K562 (cell line): ENCODE measurements at regions of chr1 and their contacts with region 1.

Region 1: DNA sequence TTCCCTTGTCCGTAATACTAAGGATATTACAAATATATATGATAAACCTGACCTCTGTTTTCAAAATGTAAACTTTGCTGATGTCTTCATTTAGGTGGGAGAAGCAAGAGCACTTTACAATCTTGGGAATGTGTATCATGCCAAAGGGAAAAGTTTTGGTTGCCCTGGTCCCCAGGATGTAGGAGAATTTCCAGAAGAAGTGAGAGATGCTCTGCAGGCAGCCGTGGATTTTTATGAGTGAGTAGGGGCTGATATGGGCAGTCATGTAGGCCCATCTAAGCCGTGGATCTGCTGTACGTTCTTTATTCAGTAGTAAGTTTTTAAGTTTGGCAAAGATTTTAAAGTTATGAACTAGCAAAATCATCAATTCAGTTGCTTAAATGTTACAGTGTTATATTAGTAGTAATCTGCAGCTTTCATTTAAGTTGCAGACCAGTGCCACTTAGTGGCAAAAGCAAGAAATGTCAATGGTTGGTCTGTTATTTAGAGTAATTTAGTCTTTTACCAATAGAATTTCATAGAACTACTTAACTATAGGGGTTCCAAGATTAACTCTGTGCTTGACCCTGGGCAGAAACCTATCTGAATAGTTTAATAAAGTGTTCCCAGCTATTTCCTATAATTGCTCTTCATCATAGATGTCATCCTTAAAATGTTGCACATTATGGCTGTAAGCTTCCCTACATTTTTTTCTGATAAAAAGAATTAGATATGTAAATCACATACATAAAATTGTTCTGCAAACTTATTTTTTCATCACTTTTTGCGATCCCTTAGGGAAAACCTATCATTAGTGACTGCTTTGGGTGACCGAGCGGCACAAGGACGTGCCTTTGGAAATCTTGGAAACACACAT is 21.3 kb downstream of the GPSM2 start:
- DNase-seq: peak in 2 of 4 experiments; percentile 56 to 72
- ATAC-seq: peak; percentile 91
- H3K4me3 ChIP-seq: no peak overlapping the region
- H3K27ac ChIP-seq: no peak overlapping the region
- H3K4me1 ChIP-seq: no peaks in the 10 kb centered on the region
- H3K27me3 ChIP-seq: no peaks in the 10 kb centered on the region
- CTCF ChIP-seq: peak; percentile 61 to 94 (median 67); a peak in 5 of 6 replicates
- EP300 ChIP-seq: no peak
- POLR2A ChIP-seq: no peak
- RAD21 ChIP-seq: peak; percentile 89 to 96

Region 2: DNA sequence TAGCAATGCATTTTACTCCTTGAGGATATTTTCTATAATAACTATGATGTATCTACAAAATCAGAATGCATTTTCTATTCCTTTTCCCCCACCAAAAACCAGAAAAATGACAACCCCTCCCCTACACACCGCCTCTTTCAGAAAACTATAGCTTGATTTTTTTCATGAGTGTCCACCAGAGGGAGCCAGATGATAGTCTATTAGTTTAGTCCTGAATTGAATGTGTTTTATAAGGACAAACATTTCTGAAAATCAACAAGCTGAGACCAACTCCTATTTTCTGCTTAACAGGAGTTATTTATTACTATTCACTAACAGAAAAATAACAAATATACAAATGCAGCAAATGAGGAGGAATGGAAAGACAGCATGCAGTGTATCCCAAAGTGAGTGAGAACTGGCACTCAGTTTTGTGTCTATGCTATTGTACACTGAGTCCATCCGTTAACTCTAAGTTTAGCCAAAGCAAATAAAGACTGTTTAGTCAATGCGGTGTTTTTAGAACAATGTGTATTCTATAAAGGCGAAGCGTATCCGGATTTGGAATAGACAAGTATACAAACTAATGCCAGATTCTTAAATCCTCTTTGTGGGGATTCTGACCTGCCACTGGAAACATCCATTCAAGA is 1115.8 kb before region 1 on chr1:
- CTCF ChIA-PET with region 1: no interaction called
- POLR2A ChIA-PET with region 1: no interaction called
- in situ Hi-C with region 1: no loop called
- intact Hi-C with region 1: loop called (anchors 5 kb)
- DNase-seq: peak; percentile 35 to 75 (median 57)
- ATAC-seq: peak; percentile 89
- H3K4me3 ChIP-seq: no peak overlapping the region
- H3K27ac ChIP-seq: no peak overlapping the region
- H3K4me1 ChIP-seq: no peaks in the 10 kb centered on the region
- H3K27me3 ChIP-seq: no peaks in the 10 kb centered on the region
- CTCF ChIP-seq: peak; percentile 58 to 84 (median 60); a peak in 5 of 6 replicates
- EP300 ChIP-seq: no peak
- POLR2A ChIP-seq: no peak
- RAD21 ChIP-seq: peak; percentile 92 to 95

Region 3: GRCh38 chr1:108512239-108512981 is 385.7 kb before region 1 on chr1:
- CTCF ChIA-PET with region 1: interaction called, 16 read pairs
- POLR2A ChIA-PET with region 1: no interaction called
- in situ Hi-C with region 1: no loop called
- intact Hi-C with region 1: loop called (anchors 5 kb)
- DNase-seq: peak; percentile 31 to 68 (median 48)
- ATAC-seq: peak; percentile 87
- H3K4me3 ChIP-seq: no peak overlapping the region
- H3K27ac ChIP-seq: no peak overlapping the region
- H3K4me1 ChIP-seq: no peaks in the 10 kb centered on the region
- H3K27me3 ChIP-seq: no peaks in the 10 kb centered on the region
- CTCF ChIP-seq: peak; percentile 77 to 99 (median 81)
- EP300 ChIP-seq: no peak
- POLR2A ChIP-seq: no peak
- RAD21 ChIP-seq: peak; percentile 100

Region 4: DNA sequence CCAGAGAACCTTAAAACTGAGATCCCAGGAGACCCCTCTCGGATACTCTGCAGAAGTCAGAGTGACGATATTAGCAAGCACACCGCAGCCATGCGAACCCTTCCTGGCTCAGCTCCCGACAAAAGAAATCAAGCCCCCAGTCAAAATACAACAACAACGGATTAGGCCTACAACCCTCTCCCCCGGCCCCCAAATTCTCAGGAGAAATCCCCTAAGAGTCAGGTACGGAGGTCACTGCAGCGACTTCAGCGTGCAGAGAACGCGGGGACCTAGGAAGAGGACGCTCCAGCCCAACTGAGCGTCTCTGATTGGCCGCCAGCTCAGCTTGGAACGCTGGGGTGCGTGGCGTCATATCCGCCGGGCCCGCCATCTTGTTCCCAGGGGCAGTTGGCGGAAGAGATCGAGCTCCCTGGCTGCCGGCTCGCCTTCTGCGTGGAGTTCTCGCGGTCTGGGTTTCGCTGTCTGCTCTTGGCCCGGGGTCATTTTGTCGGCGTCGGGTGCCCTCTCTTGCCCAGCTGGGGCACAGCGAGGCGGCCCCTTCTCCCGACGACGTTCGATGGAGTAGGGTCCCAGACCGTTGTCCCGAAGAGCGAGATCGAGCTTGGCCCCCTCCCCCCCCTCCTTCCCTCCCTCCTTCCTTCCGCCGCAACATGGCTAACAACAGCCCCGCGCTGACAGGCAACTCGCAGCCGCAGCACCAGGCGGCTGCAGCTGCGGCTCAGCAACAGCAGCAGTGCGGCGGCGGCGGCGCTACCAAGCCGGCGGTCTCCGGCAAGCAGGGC is 206.0 kb before region 1 on chr1 and contains the start of gene PRPF38B:
- CTCF ChIA-PET with region 1: interaction called, 3 read pairs
- POLR2A ChIA-PET with region 1: no interaction called
- in situ Hi-C with region 1: no loop called
- intact Hi-C with region 1: loop called (anchors 2 kb)
- DNase-seq: peak; percentile 96 to 99 (median 98)
- ATAC-seq: peak; percentile 91
- H3K4me3 ChIP-seq: peak within 1 kb of the TSS; percentile 74
- H3K27ac ChIP-seq: peak within 1 kb of the TSS; percentile 94
- H3K4me1 ChIP-seq: peaks cover 5 to 7% of the 10 kb centered on the region in 2 experiments; a peak in 3 of 5 replicates
- H3K27me3 ChIP-seq: no peaks in the 10 kb centered on the region
- CTCF ChIP-seq: no peak
- EP300 ChIP-seq: 0 out of 2 replicates have a peak, but pooled peaks have one; percentile 10
- POLR2A ChIP-seq: peak; percentile 99
- RAD21 ChIP-seq: no peak
- polyA plus RNA-seq, gene PRPF38B: 25.3 to 34.3 TPM

Region 5: GRCh38 chr1:108828022-108828961 is 69.8 kb before region 1 on chr1:
- CTCF ChIA-PET with region 1: interaction called, 89 read pairs
- POLR2A ChIA-PET with region 1: interaction called, 3 read pairs
- in situ Hi-C with region 1: loop called (anchors 5 kb)
- intact Hi-C with region 1: loop called (anchors 1 kb)
- DNase-seq: peak; percentile 78 to 90 (median 80)
- ATAC-seq: peak; percentile 88
- H3K4me3 ChIP-seq: no peak overlapping the region
- H3K27ac ChIP-seq: no peak overlapping the region
- H3K4me1 ChIP-seq: peaks cover 3 to 4% of the 10 kb centered on the region in 2 experiments; a peak in 3 of 5 replicates
- H3K27me3 ChIP-seq: no peaks in the 10 kb centered on the region
- CTCF ChIP-seq: peak; percentile 86 to 92 (median 87)
- EP300 ChIP-seq: no peak
- POLR2A ChIP-seq: no peak
- RAD21 ChIP-seq: peak; percentile 75 to 92

Region 6: DNA sequence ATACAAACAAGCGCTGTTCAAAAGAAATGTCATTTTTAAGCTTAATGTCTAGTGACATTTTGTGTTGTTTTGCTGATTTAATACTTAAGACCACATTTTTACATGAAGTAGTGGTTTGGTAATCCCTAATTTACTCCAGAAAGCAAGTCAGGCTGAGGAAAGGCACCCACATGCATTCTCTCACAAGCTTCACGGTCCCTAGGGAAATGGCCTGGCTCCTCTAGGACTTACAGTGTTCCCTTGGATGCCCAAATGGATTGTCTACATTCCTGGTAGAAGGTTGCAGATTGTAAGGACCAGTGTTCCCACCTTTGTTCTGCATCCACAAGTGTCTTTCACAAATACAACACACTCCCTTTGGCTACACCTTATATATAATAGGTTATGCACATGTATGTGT is 11.8 kb before region 1 on chr1:
- CTCF ChIA-PET with region 1: no interaction called
- POLR2A ChIA-PET with region 1: interaction called, 11 read pairs
- in situ Hi-C with region 1: no loop called
- intact Hi-C with region 1: no loop called
- DNase-seq: no peak
- ATAC-seq: no peak
- H3K4me3 ChIP-seq: no peak overlapping the region
- H3K27ac ChIP-seq: no peak overlapping the region
- H3K4me1 ChIP-seq: peaks cover 0 to 12% of the 10 kb centered on the region in 2 experiments; a peak in 2 of 5 replicates
- H3K27me3 ChIP-seq: no peaks in the 10 kb centered on the region; a peak in 1 of 5 replicates
- CTCF ChIP-seq: no peak
- EP300 ChIP-seq: no peak
- POLR2A ChIP-seq: no peak
- RAD21 ChIP-seq: no peak

Region 7: GRCh38 chr1:110229348-110230001 is 1331.4 kb after region 1 on chr1:
- CTCF ChIA-PET with region 1: no interaction called
- POLR2A ChIA-PET with region 1: no interaction called
- in situ Hi-C with region 1: no loop called
- intact Hi-C with region 1: no loop called
- DNase-seq: no peak
- ATAC-seq: no peak
- H3K4me3 ChIP-seq: no peak overlapping the region
- H3K27ac ChIP-seq: no peak overlapping the region
- H3K4me1 ChIP-seq: peaks cover 0 to 3% of the 10 kb centered on the region in 2 experiments; a peak in 1 of 5 replicates
- H3K27me3 ChIP-seq: peaks cover 33 to 97% of the 10 kb centered on the region in 2 experiments; a peak in 4 of 5 replicates
- CTCF ChIP-seq: no peak
- EP300 ChIP-seq: no peak
- POLR2A ChIP-seq: no peak
- RAD21 ChIP-seq: no peak